GM12878 (cell line): ENCODE measurements at regions of chr6 and their contacts with region 1.

Region 1: GRCh38 chr6:167898673-167899311 is 72.1 kb downstream of the AFDN start:
- DNase-seq: no peak
- ATAC-seq: peak; percentile 74
- H3K4me3 ChIP-seq: no peak overlapping the region
- H3K27ac ChIP-seq: no peak overlapping the region
- H3K4me1 ChIP-seq: no peaks in the 10 kb centered on the region
- H3K27me3 ChIP-seq: no peaks in the 10 kb centered on the region
- CTCF ChIP-seq: peak; percentile 68 to 77 (median 71); a peak in 5 of 6 replicates
- EP300 ChIP-seq: no peak
- POLR2A ChIP-seq: no peak
- RAD21 ChIP-seq: peak; percentile 92

Region 2: GRCh38 chr6:167485186-167485978 is 413.4 kb before region 1 on chr6:
- CTCF ChIA-PET with region 1: interaction called, 9 read pairs
- POLR2A ChIA-PET with region 1: no interaction called
- RAD21 ChIA-PET with region 1: interaction called, 5 read pairs
- SMC1A ChIA-PET with region 1: interaction called, 7 read pairs
- in situ Hi-C with region 1: no loop called
- intact Hi-C with region 1: loop called (anchors 10 kb)
- DNase-seq: no peak
- ATAC-seq: no peak
- H3K4me3 ChIP-seq: no peak overlapping the region
- H3K27ac ChIP-seq: no peak overlapping the region
- H3K4me1 ChIP-seq: no peaks in the 10 kb centered on the region
- H3K27me3 ChIP-seq: 0 out of 4 replicates have a peak, but pooled peaks cover 0 to 1% of the 10 kb centered on the region in 2 experiments
- CTCF ChIP-seq: peak in 2 of 3 experiments; percentile 23 to 31; a peak in 1 of 6 replicates
- EP300 ChIP-seq: no peak
- POLR2A ChIP-seq: no peak
- RAD21 ChIP-seq: no peak

Region 3: GRCh38 chr6:167849846-167850459 is 48.8 kb before region 1 on chr6:
- CTCF ChIA-PET with region 1: no interaction called
- POLR2A ChIA-PET with region 1: no interaction called
- RAD21 ChIA-PET with region 1: no interaction called
- SMC1A ChIA-PET with region 1: no interaction called
- in situ Hi-C with region 1: no loop called
- intact Hi-C with region 1: no loop called
- DNase-seq: no peak
- ATAC-seq: peak; percentile 61
- H3K4me3 ChIP-seq: no peak overlapping the region
- H3K27ac ChIP-seq: no peak overlapping the region
- H3K4me1 ChIP-seq: peaks cover 7% of the 10 kb centered on the region; the same call in 1 of the 2 replicates
- H3K27me3 ChIP-seq: no peaks in the 10 kb centered on the region
- CTCF ChIP-seq: no peak
- EP300 ChIP-seq: no peak
- POLR2A ChIP-seq: no peak
- RAD21 ChIP-seq: no peak